Tibial artery (tissue), 4 donors: ENCODE measurements at regions of chr6 and their contacts with region 1.

Region 1: DNA sequence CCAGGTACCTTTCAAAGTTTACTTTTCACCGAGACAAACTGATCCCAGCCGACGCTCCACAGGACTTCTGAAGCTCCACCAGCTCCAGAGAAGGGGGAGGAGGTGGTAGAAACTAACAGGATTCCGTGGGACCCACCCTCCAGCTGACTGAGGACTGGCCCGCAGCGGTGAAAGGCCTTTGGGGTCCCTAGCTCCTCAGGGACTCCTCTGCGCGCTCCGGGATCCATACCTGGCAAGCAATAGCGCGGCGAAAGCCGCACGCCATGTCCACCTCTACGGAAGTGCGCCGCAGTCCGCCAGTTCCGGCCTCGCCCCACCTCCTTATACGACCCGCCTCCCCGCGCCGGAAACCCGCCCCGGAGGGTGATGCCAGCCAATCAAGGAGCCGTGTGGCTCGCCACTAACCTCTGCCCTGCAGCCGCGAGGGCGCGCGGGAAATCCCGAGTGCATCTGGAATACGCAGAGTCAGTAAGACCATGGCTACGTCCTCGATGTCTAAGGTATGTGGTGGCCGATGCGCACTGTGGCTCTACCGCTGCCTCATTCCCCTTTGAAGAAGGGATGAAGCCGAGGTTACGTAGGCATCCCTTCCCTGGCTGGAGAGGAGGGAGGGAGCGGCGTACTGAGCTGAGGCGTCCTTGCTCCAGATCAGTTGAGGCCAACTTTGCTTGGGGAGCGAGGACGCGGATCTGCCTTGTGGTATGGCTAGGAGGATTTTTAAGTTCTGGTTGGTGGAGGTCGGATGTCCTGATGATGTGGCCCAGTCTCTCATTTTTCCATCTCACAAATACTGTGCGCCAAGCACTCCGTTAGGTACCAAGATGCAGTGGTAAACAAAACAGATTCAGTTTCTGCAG is at the starts of genes ORC3 and RARS2:
- DNase-seq: peak; percentile 97 to 98
- H3K4me3 ChIP-seq: peak within 1 kb of the TSS; percentile 83 to 85
- H3K27ac ChIP-seq: peak within 1 kb of the TSS; percentile 87 to 89
- H3K4me1 ChIP-seq: peaks cover 0 to 46% (median 31%) of the 10 kb centered on the region in 4 donors
- H3K27me3 ChIP-seq: no peaks in the 10 kb centered on the region
- CTCF ChIP-seq: no peak

Region 2: GRCh38 chr6:87366072-87366827 is 223.7 kb before region 1 on chr6:
- intact Hi-C with region 1: no loop called
- DNase-seq: no peak
- H3K4me3 ChIP-seq: no peak overlapping the region
- H3K27ac ChIP-seq: no peak overlapping the region
- H3K4me1 ChIP-seq: no peaks in the 10 kb centered on the region
- H3K27me3 ChIP-seq: no peaks in the 10 kb centered on the region
- CTCF ChIP-seq: no peak

Region 3: DNA sequence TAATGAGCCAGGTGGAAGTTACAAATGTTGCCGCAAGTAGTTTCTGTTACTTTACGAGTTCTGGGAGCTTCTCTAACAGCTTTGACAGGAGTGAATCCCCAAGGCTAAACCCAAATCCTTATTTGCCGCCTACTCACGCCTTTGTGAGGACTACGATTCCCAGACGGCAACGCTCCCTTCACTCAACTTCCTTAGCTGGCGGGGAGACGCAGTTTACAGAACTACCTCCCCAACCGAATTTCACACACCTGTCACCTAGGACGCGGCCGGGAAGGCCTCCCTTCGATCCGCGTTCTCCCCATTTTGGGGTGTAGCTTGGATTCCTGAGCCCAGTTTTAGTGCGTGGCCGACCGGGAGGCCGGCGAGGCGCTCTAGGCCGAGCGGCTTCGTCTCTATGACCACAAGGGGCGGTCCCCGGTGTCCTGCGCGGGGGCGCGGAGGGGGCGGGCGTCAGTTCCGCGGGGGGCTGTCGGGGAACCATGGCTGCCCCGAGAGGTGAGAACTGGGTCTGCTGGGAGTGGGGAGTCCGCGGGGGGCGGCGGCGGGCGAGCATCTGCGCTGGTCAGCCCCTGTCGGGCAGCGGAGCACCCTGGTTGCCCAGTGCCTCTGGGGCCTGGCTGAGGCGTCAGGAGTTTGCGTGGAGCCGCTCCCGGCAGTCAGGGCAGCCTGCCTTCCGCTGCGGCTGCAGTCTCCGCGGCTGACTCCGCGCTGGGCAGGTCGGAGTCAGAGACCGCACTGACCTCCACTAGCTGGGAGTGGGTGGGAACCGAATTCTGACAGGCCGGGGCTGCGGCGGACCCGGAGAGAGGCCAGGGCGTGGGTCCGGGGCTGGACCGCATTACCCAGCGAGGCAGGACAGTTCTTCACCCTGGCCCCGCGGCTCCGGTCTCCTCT is 117.1 kb before region 1 on chr6 and contains the start of gene SLC35A1:
- intact Hi-C with region 1: loop called (anchors 5 kb)
- DNase-seq: peak; percentile 82 to 92
- H3K4me3 ChIP-seq: peak within 1 kb of the TSS; percentile 65 to 67
- H3K27ac ChIP-seq: peak within 1 kb of the TSS; percentile 86 to 87
- H3K4me1 ChIP-seq: peaks cover 0 to 15% (median 9%) of the 10 kb centered on the region in 4 donors
- H3K27me3 ChIP-seq: no peaks in the 10 kb centered on the region
- CTCF ChIP-seq: peak; percentile 36 to 41

Region 4: GRCh38 chr6:87682310-87682709 is 92.4 kb after region 1 on chr6:
- intact Hi-C with region 1: no loop called
- DNase-seq: no peak
- H3K4me3 ChIP-seq: no peak overlapping the region
- H3K27ac ChIP-seq: no peak overlapping the region
- H3K4me1 ChIP-seq: peaks cover 0 to 68% (median 0%) of the 10 kb centered on the region in 4 donors
- H3K27me3 ChIP-seq: no peaks in the 10 kb centered on the region
- CTCF ChIP-seq: no peak

Region 5: DNA sequence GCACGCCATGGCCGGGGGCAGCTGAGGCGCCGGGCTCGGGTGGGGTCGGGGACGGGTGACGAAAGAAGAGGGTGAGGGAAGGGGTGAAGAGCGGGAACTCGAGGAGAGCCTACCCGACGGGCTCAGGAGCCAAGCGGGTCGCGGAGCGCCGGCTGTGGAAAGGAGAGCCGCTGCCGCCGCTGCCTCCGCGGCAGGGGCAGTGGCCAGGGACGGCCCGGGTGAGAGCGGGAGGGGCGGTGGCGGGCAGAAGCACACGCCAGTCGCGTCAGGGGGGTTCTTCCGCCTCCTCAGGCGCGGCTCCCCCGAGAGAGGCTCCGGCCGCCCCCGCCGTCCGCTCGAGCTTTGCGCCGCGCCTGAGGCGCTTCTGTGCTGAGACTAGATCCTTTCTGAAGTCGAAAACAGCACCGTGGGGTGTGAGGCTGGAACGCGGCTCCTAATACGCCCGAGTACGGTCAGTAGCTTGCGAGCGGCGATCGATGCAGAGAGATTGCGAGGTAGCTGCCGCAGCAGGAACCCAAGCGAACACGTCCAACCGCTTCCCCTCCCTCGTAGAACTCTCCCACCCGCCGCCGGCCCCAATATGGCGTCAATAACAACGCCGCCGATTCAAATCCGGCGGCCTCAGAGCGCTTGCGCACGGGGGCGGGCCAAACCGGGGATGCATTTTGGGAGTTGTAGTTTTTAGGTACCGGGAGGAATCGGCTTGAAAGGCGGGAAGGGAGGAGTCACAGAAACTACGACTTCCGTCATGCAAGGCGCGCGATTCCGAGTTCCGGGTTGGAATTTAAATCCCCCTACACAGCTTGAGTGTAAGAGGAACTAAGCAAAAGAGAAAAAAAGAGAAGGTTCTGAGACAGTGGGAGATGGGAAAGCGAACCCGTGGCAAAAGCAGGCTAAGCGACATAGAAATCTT is 112.0 kb after region 1 on chr6 and contains the start of gene AKIRIN2:
- intact Hi-C with region 1: loop called (anchors 1 kb)
- DNase-seq: peak; percentile 97 to 98
- H3K4me3 ChIP-seq: peak within 1 kb of the TSS; percentile 73 to 98
- H3K27ac ChIP-seq: peak within 1 kb of the TSS; percentile 93 to 97
- H3K4me1 ChIP-seq: peaks cover 0 to 38% (median 11%) of the 10 kb centered on the region in 4 donors
- H3K27me3 ChIP-seq: no peaks in the 10 kb centered on the region
- CTCF ChIP-seq: no peak